Activated CD4-positive, alpha-beta T cell treated with anti-CD3 and anti-CD28 coated beads, Interleukin-2, amount 10 ng/mL, durations not matched to agents 7 days and 5 days (primary cell): ENCODE measurements at regions of chr1 and their contacts with region 1.

Region 1: GRCh38 chr1:209747580-209748262 is 8.1 kb upstream of the TRAF3IP3 start:
- DNase-seq: peak; percentile 81
- H3K4me3 Mint-ChIP-seq: peak overlapping the region; percentile 70
- H3K27ac Mint-ChIP-seq: peak overlapping the region; percentile 96
- H3K4me1 Mint-ChIP-seq: peaks cover 62% of the 10 kb centered on the region
- H3K27me3 Mint-ChIP-seq: no peaks in the 10 kb centered on the region

Region 2: GRCh38 chr1:209576798-209577197 is 170.9 kb before region 1 on chr1:
- CTCF ChIA-PET with region 1: interaction called, 13 read pairs
- POLR2A ChIA-PET with region 1: no interaction called
- DNase-seq: peak; percentile 72
- H3K4me3 Mint-ChIP-seq: no peak overlapping the region
- H3K27ac Mint-ChIP-seq: no peak overlapping the region
- H3K4me1 Mint-ChIP-seq: no peaks in the 10 kb centered on the region
- H3K27me3 Mint-ChIP-seq: peaks cover 21% of the 10 kb centered on the region

Region 3: DNA sequence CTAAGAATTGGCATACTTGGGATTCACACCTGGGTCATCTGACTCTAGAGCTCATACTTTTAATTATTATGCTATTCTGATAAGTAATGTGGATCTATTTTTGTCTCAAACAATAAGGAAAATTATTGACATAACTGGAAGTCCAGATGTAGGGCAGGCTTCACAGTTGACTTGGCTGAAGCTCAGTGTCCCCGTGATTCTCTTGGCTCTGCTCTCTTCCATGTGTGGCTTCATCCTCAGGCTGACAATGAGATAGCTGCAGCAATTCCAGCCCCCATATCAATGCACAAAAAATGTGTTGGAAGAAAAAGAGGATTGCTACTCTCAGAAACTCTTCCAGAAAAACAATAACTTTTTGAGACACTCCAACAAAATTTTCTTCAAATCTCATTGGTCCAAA is 19.3 kb before region 1 on chr1:
- CTCF ChIA-PET with region 1: interaction called, 13 read pairs
- POLR2A ChIA-PET with region 1: no interaction called
- DNase-seq: no peak
- H3K4me3 Mint-ChIP-seq: no peak overlapping the region
- H3K27ac Mint-ChIP-seq: no peak overlapping the region
- H3K4me1 Mint-ChIP-seq: peaks cover 31% of the 10 kb centered on the region
- H3K27me3 Mint-ChIP-seq: no peaks in the 10 kb centered on the region

Region 4: DNA sequence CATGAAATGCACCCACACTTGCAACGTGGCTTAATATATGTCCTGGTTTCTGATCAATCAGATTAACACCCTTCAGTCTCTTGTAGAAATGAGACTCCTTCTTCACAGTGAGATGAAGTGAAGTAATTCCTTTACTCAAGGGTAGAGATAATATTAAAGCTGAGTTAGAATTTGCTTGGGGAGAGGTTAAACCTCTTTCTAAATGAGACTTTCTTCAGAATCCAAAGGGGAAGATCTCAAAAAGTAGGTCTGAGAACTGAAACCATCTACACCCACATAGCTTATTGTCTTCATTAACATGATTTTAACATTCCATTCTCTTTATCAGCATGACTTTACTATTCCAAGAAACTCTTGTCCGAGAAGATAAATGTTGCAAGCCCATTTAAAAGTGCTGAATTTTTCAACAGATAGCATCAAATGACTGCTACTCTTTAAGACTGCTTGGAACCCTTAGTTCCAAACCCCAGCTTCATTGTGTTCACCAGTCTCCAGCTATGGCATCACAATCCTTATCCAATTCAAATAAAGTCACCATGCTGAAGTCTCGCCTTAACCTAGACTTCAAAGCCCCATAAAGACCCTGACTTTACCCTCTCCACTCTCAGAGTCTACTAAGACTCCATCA is 11.1 kb before region 1 on chr1:
- CTCF ChIA-PET with region 1: interaction called, 14 read pairs
- POLR2A ChIA-PET with region 1: no interaction called
- DNase-seq: no peak
- H3K4me3 Mint-ChIP-seq: no peak overlapping the region
- H3K27ac Mint-ChIP-seq: no peak overlapping the region
- H3K4me1 Mint-ChIP-seq: peaks cover 6% of the 10 kb centered on the region
- H3K27me3 Mint-ChIP-seq: no peaks in the 10 kb centered on the region

Region 5: GRCh38 chr1:209769171-209769904 is 21.6 kb after region 1 on chr1:
- CTCF ChIA-PET with region 1: interaction called, 74 read pairs
- POLR2A ChIA-PET with region 1: interaction called, 15 read pairs
- DNase-seq: peak; percentile 88
- H3K4me3 Mint-ChIP-seq: no peak overlapping the region
- H3K27ac Mint-ChIP-seq: no peak overlapping the region
- H3K4me1 Mint-ChIP-seq: peaks cover 41% of the 10 kb centered on the region
- H3K27me3 Mint-ChIP-seq: no peaks in the 10 kb centered on the region

Region 6: DNA sequence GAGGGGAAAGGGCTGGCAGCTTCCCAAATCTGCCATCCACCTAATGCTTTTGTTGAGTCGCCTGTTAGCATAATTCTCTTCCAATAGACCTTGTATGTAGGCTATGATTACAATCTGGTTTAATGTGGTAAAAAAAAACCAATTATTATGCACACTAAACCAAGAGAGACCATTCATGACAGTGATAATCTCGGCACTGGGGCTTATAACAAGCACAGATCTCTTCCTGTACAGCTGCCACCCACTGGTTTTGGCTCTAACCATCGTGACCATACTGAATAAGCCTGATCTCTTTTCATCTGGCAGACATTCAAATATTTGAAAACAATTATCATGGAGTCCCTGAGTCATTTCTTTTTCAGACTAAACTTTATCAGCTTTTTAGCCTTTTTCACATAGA is 178.3 kb after region 1 on chr1:
- CTCF ChIA-PET with region 1: no interaction called
- POLR2A ChIA-PET with region 1: no interaction called
- DNase-seq: no peak
- H3K4me3 Mint-ChIP-seq: no peak overlapping the region
- H3K27ac Mint-ChIP-seq: no peak overlapping the region
- H3K4me1 Mint-ChIP-seq: no peaks in the 10 kb centered on the region
- H3K27me3 Mint-ChIP-seq: peaks cover 7% of the 10 kb centered on the region